Stomach (tissue), 19 donors: ENCODE measurements at regions of chr2 and their contacts with region 1.

Region 1: DNA sequence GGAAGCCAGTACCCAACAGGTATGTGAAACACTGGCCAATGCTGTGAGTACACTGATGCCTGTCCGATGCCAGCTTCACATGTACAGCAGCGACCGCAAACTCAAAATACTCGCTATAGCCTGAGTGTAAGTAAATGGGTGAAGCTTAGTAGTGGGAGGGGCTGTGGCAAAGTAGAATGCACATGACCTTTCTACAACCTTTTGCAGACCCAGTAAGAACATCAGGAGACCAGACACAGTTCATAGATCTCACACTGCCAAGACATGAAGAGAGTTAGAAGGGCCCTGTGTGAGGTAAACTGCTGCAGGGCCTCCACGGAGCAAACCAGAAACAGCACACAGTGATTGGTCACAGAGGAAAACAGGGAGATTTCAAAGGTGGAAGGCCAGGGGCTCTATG is 9.1 kb upstream of the UBXN4 start:
- DNase-seq: no peak
- H3K4me3 ChIP-seq: no peak overlapping the region
- H3K27ac ChIP-seq: no peak overlapping the region
- H3K4me1 ChIP-seq: no peaks in the 10 kb centered on the region
- H3K27me3 ChIP-seq: no peaks in the 10 kb centered on the region
- CTCF ChIP-seq: no peak
- EP300 ChIP-seq: no peak
- POLR2A ChIP-seq: no peak

Region 2: GRCh38 chr2:135876066-135876711 is 143.6 kb after region 1 on chr2 and contains the start of gene MCM6:
- intact Hi-C with region 1: loop called (anchors 10 kb)
- DNase-seq: peak; percentile 97 to 99
- H3K4me3 ChIP-seq: peak within 1 kb of the TSS; percentile 66 to 93 (median 81)
- H3K27ac ChIP-seq: peak within 1 kb of the TSS; percentile 77 to 93 (median 85)
- H3K4me1 ChIP-seq: peaks cover 0 to 30% (median 20%) of the 10 kb centered on the region in 4 donors
- H3K27me3 ChIP-seq: no peaks in the 10 kb centered on the region
- CTCF ChIP-seq: peak in 3 of 7 experiments; percentile 16 to 18 (median 16)
- EP300 ChIP-seq: no peak
- POLR2A ChIP-seq: no peak
- total RNA-seq, gene MCM6: 1.8 to 41.1 (median 14.6) TPM